Activated CD4-positive, alpha-beta memory T cell treated with anti-CD3 and anti-CD28 coated beads, Interleukin-2, amount 10 ng/mL, durations not matched to agents 7 days and 5 days (primary cell): ENCODE measurements at regions of chr6 and their contacts with region 1.

Region 1: GRCh38 chr6:149094156-149094555 is 223.4 kb upstream of the TAB2 start:
- DNase-seq: peak; percentile 48
- H3K4me3 Mint-ChIP-seq: peak overlapping the region; percentile 71
- H3K27ac Mint-ChIP-seq: peak overlapping the region; percentile 97
- H3K4me1 Mint-ChIP-seq: peaks cover 80% of the 10 kb centered on the region
- H3K27me3 Mint-ChIP-seq: no peaks in the 10 kb centered on the region

Region 2: GRCh38 chr6:149075616-149076364 is 18.4 kb before region 1 on chr6:
- CTCF ChIA-PET with region 1: interaction called, 10 read pairs
- POLR2A ChIA-PET with region 1: interaction called, 27 read pairs
- DNase-seq: no peak
- H3K4me3 Mint-ChIP-seq: no peak overlapping the region
- H3K27ac Mint-ChIP-seq: peak overlapping the region; percentile 38
- H3K4me1 Mint-ChIP-seq: peaks cover 46% of the 10 kb centered on the region
- H3K27me3 Mint-ChIP-seq: no peaks in the 10 kb centered on the region

Region 3: GRCh38 chr6:149112976-149113375 is 18.8 kb after region 1 on chr6:
- CTCF ChIA-PET with region 1: no interaction called
- POLR2A ChIA-PET with region 1: interaction called, 24 read pairs
- DNase-seq: no peak
- H3K4me3 Mint-ChIP-seq: no peak overlapping the region
- H3K27ac Mint-ChIP-seq: peak overlapping the region; percentile 65
- H3K4me1 Mint-ChIP-seq: peaks cover 52% of the 10 kb centered on the region
- H3K27me3 Mint-ChIP-seq: no peaks in the 10 kb centered on the region

Region 4: GRCh38 chr6:149129371-149130077 is 35.4 kb after region 1 on chr6:
- CTCF ChIA-PET with region 1: interaction called, 14 read pairs
- POLR2A ChIA-PET with region 1: interaction called, 156 read pairs
- DNase-seq: no peak
- H3K4me3 Mint-ChIP-seq: no peak overlapping the region
- H3K27ac Mint-ChIP-seq: peak overlapping the region; percentile 91
- H3K4me1 Mint-ChIP-seq: peaks cover 8% of the 10 kb centered on the region
- H3K27me3 Mint-ChIP-seq: no peaks in the 10 kb centered on the region

Region 5: GRCh38 chr6:149147938-149148718 is 54.0 kb after region 1 on chr6:
- CTCF ChIA-PET with region 1: interaction called, 20 read pairs
- POLR2A ChIA-PET with region 1: interaction called, 169 read pairs
- DNase-seq: peak; percentile 50
- H3K4me3 Mint-ChIP-seq: peak overlapping the region; percentile 44
- H3K27ac Mint-ChIP-seq: peak overlapping the region; percentile 91
- H3K4me1 Mint-ChIP-seq: peaks cover 91% of the 10 kb centered on the region
- H3K27me3 Mint-ChIP-seq: no peaks in the 10 kb centered on the region

Region 6: GRCh38 chr6:149182262-149182661 is 88.1 kb after region 1 on chr6:
- CTCF ChIA-PET with region 1: no interaction called
- POLR2A ChIA-PET with region 1: no interaction called
- DNase-seq: no peak
- H3K4me3 Mint-ChIP-seq: no peak overlapping the region
- H3K27ac Mint-ChIP-seq: no peak overlapping the region
- H3K4me1 Mint-ChIP-seq: peaks cover 8% of the 10 kb centered on the region
- H3K27me3 Mint-ChIP-seq: no peaks in the 10 kb centered on the region

Region 7: GRCh38 chr6:149316798-149317655 is 222.9 kb after region 1 on chr6:
- CTCF ChIA-PET with region 1: interaction called, 11 read pairs
- POLR2A ChIA-PET with region 1: interaction called, 235 read pairs
- DNase-seq: peak; percentile 93
- H3K4me3 Mint-ChIP-seq: peak overlapping the region; percentile 84
- H3K27ac Mint-ChIP-seq: peak overlapping the region; percentile 82
- H3K4me1 Mint-ChIP-seq: peaks cover 27% of the 10 kb centered on the region
- H3K27me3 Mint-ChIP-seq: no peaks in the 10 kb centered on the region

Region 8: GRCh38 chr6:149362289-149362688 is 268.1 kb after region 1 on chr6:
- CTCF ChIA-PET with region 1: no interaction called
- POLR2A ChIA-PET with region 1: no interaction called
- DNase-seq: no peak
- H3K4me3 Mint-ChIP-seq: no peak overlapping the region
- H3K27ac Mint-ChIP-seq: peak overlapping the region; percentile 13
- H3K4me1 Mint-ChIP-seq: peaks cover 71% of the 10 kb centered on the region
- H3K27me3 Mint-ChIP-seq: no peaks in the 10 kb centered on the region

Region 9: GRCh38 chr6:149431905-149432775 is 338.0 kb after region 1 on chr6:
- CTCF ChIA-PET with region 1: interaction called, 12 read pairs
- POLR2A ChIA-PET with region 1: interaction called, 4 read pairs
- DNase-seq: peak; percentile 91
- H3K4me3 Mint-ChIP-seq: peak overlapping the region; percentile 55
- H3K27ac Mint-ChIP-seq: peak overlapping the region; percentile 66
- H3K4me1 Mint-ChIP-seq: peaks cover 9% of the 10 kb centered on the region
- H3K27me3 Mint-ChIP-seq: no peaks in the 10 kb centered on the region